ENCODE measurements at regions of chr14 and their contacts with region 1.

Region 1: DNA sequence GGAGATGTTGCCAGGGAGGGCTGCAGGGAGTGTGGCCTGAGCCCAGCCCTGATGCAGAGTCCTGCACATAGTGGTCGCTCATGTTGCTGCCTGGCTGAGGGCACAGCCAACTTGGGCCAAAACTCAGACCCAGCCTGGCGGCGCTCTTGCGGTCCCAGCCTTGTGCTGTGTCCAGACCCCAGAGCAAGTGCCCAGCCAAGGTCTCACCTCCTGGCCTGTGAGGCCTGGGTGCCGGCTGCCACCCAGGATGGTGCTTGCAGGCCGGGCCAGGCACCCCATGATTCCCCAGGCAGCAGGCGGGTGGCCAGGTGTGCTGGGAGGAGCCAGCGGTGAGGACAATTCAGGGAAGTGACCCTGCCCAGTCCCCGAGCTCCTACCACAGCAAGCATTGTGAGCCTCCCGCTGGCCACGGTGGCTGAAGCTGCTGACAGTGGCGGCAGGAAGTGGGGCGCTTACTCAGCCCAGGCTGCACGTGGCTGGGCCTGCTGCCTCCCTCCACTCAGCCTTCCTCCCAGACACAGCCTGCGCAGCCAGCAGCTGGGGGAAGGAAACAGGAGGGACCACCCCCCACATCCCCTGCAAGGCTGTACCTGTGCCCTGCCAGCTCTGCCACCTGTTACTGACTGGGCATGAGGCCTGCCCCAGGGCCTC is 17.7 kb upstream of the PGF start:
- DNase-seq: no peak
- H3K4me3 Mint-ChIP-seq: no peak overlapping the region
- H3K27ac Mint-ChIP-seq: no peak overlapping the region
- H3K4me1 Mint-ChIP-seq: no peaks in the 10 kb centered on the region
- H3K27me3 Mint-ChIP-seq: no peaks in the 10 kb centered on the region
- CTCF ChIP-seq: no peak

Region 2: GRCh38 chr14:74893614-74894091 is 79.5 kb before region 1 on chr14:
- CTCF ChIA-PET with region 1: interaction called, 10 read pairs
- intact Hi-C with region 1: no loop called
- DNase-seq: no peak
- H3K4me3 Mint-ChIP-seq: no peak overlapping the region
- H3K27ac Mint-ChIP-seq: no peak overlapping the region
- H3K4me1 Mint-ChIP-seq: peaks cover 3% of the 10 kb centered on the region
- H3K27me3 Mint-ChIP-seq: no peaks in the 10 kb centered on the region
- CTCF ChIP-seq: no peak

Region 3: GRCh38 chr14:75979071-75979571 is 1006.0 kb after region 1 on chr14:
- CTCF ChIA-PET with region 1: no interaction called
- intact Hi-C with region 1: no loop called
- DNase-seq: peak; percentile 12
- H3K4me3 Mint-ChIP-seq: no peak overlapping the region
- H3K27ac Mint-ChIP-seq: no peak overlapping the region
- H3K4me1 Mint-ChIP-seq: peaks cover 16% of the 10 kb centered on the region
- H3K27me3 Mint-ChIP-seq: peaks cover 10% of the 10 kb centered on the region
- CTCF ChIP-seq: peak; percentile 52

Measured in Calu3 (cell line).